Left colon (tissue), 2 donors: ENCODE measurements at regions of chr19 and their contacts with region 1.

Region 1: DNA sequence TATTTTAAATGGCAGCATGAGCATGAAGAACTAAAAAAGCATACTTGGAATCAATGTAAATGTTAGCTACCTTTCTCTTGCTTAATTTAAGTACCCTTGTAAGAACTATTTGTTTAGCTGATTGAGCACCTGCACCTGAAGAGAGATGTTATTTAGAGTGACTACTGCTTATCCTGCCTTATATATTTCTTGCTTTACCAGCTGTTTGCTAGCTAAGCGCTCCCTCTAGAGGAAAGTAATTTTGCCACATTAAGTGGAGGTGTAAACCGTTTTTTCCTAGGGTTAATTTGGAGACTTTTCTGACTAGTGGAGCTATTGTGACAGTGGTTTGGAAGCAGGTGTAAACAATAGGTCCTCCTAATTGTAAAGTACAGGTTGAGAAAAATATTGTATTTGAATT is 19.4 kb upstream of the PSG2 start:
- DNase-seq: no peak
- ATAC-seq: no peak

Region 2: DNA sequence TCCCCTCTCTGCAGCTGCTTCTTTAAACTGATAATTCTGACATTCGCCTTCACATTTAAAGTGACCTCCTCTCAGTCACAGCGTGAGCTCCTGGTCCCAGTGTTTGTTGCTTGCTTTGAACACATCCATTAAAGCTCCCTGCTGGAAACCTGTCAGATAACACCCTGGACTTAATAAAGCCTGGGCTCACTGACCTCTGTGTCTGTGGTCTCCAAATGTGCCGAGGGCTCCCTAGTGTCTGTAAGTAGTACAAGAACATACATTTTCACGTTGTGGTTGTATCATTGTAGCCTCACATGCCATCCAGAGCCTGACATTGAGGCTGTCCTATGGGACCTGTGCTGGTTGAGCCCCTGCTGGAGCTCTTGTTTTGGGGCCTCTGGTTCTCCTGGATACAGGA is 106.0 kb after region 1 on chr19:
- intact Hi-C with region 1: loop called in 1 of 2 experiments (anchors 10 kb)
- DNase-seq: no peak
- ATAC-seq: no peak